ENCODE measurements at regions of chr3 and their contacts with region 1.

Region 1: GRCh38 chr3:121698901-121699300 is 38.2 kb upstream of the HCLS1 start:
- DNase-seq: no peak
- ATAC-seq: no peak
- H3K4me3 ChIP-seq: no peak overlapping the region
- H3K27ac ChIP-seq: no peak overlapping the region
- H3K4me1 ChIP-seq: no peaks in the 10 kb centered on the region
- H3K27me3 ChIP-seq: no peaks in the 10 kb centered on the region
- CTCF ChIP-seq: no peak
- EP300 ChIP-seq: no peak
- POLR2A ChIP-seq: no peak
- RAD21 ChIP-seq: no peak

Region 2: GRCh38 chr3:121681792-121682191 is 17.1 kb before region 1 on chr3:
- CTCF ChIA-PET with region 1: interaction called, 4 read pairs
- POLR2A ChIA-PET with region 1: interaction called, 4 read pairs
- RAD21 ChIA-PET with region 1: no interaction called
- SMC1A ChIA-PET with region 1: interaction called, 30 read pairs
- in situ Hi-C with region 1: no loop called
- intact Hi-C with region 1: no loop called
- DNase-seq: no peak
- ATAC-seq: no peak
- H3K4me3 ChIP-seq: no peak overlapping the region
- H3K27ac ChIP-seq: no peak overlapping the region
- H3K4me1 ChIP-seq: no peaks in the 10 kb centered on the region
- H3K27me3 ChIP-seq: no peaks in the 10 kb centered on the region
- CTCF ChIP-seq: no peak
- EP300 ChIP-seq: no peak
- POLR2A ChIP-seq: no peak
- RAD21 ChIP-seq: no peak

Region 3: GRCh38 chr3:121863801-121864200 is 164.9 kb after region 1 on chr3:
- CTCF ChIA-PET with region 1: no interaction called
- POLR2A ChIA-PET with region 1: no interaction called
- RAD21 ChIA-PET with region 1: no interaction called
- SMC1A ChIA-PET with region 1: no interaction called
- in situ Hi-C with region 1: no loop called
- intact Hi-C with region 1: no loop called
- DNase-seq: no peak
- ATAC-seq: no peak
- H3K4me3 ChIP-seq: no peak overlapping the region
- H3K27ac ChIP-seq: no peak overlapping the region
- H3K4me1 ChIP-seq: no peaks in the 10 kb centered on the region
- H3K27me3 ChIP-seq: no peaks in the 10 kb centered on the region
- CTCF ChIP-seq: no peak
- EP300 ChIP-seq: no peak
- POLR2A ChIP-seq: no peak
- RAD21 ChIP-seq: no peak

Measured in GM12878 (cell line).